Cardiac septum (tissue), 1 donor: ENCODE measurements at regions of chr1 and their contacts with region 1.

Region 1: GRCh38 chr1:198867182-198867581 is 228.3 kb downstream of the PTPRC start:
- DNase-seq: no peak

Region 2: DNA sequence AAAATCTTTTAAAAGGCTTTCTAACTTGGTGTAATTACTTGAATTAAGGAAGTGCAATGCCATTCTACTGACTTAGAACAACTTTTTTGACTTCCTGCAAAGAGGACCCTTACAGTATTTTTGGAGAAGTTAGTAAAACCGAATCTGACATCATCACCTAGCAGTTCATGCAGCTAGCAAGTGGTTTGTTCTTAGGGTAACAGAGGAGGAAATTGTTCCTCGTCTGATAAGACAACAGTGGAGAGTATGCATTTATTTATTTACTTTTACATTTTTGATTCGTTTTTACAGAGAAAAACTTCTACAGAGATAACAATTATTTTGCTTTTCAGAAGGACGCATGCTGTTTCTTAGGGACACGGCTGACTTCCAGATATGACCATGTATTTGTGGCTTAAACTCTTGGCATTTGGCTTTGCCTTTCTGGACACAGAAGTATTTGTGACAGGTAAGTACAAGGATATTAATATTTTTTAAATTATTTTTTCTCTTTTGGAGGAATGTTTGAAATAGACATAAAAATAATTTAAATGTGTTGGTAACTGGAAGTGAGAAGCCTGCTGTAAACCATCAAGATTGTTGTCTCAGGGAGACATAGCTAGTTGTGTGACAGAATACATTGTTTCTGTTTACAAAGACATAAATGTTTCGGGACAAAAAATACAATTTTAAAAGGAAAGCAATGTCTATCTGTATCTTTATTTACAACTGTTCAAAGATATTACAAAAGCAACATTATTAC is 228.1 kb before region 1 on chr1 and contains the start of gene PTPRC:
- intact Hi-C with region 1: no loop called
- DNase-seq: no peak
- total RNA-seq, gene PTPRC: 11.4 TPM

Region 3: GRCh38 chr1:198749279-198749678 is 117.9 kb before region 1 on chr1:
- intact Hi-C with region 1: no loop called
- DNase-seq: no peak

Region 4: GRCh38 chr1:198903203-198903602 is 36.0 kb after region 1 on chr1:
- intact Hi-C with region 1: loop called (anchors 5 kb)
- DNase-seq: no peak

Region 5: GRCh38 chr1:199020904-199021303 is 153.7 kb after region 1 on chr1:
- intact Hi-C with region 1: no loop called
- DNase-seq: no peak

Region 6: DNA sequence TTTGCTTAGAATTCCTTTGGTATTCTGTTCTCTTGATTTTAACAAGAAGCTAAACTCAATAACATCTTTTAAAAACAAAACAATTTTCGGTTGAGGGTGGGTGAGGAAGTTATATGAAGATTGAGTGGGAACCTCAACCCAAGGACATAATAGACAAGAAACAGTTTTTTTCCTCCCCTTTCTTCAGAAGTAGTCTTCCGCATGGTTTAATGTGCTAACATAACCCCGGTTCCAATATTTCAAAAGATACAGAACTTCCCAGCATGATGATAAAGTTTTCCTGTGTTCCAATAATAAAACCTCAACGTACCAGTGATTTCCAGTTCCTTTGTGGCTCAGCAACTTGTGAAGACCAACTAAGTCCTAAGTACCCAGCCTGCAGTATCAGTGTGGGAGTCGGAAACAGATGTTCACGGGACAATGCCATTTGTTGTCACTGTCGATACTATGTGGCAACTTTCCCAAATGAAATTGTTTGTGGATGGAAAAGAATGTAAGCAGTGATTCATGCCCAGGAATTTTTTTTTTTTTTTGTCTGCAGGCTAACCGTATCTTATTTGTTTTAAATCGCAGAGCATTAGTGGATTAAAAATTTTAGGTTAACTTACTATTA is 1208.9 kb after region 1 on chr1:
- intact Hi-C with region 1: no loop called
- DNase-seq: no peak